Transverse colon (tissue), 4 donors: ENCODE measurements at regions of chr1 and their contacts with region 1.

Region 1: GRCh38 chr1:197924516-197925123 is 7.4 kb downstream of the LHX9 start:
- DNase-seq: no peak
- H3K4me3 ChIP-seq: no peak overlapping the region
- H3K27ac ChIP-seq: no peak overlapping the region
- H3K4me1 ChIP-seq: peaks cover 3 to 15% (median 4%) of the 10 kb centered on the region in 4 donors
- H3K27me3 ChIP-seq: peaks cover 91% of the 10 kb centered on the region
- CTCF ChIP-seq: peak; percentile 56 to 67 (median 62)
- EP300 ChIP-seq: no peak
- POLR2A ChIP-seq: no peak

Region 2: GRCh38 chr1:197521118-197521739 is 403.4 kb before region 1 on chr1:
- in situ Hi-C with region 1: loop called in 1 of 4 experiments (anchors 10 kb)
- intact Hi-C with region 1: no loop called
- DNase-seq: no peak
- H3K4me3 ChIP-seq: no peak overlapping the region
- H3K27ac ChIP-seq: no peak overlapping the region
- H3K4me1 ChIP-seq: no peaks in the 10 kb centered on the region
- H3K27me3 ChIP-seq: no peaks in the 10 kb centered on the region
- CTCF ChIP-seq: peak; percentile 38 to 55 (median 53)
- EP300 ChIP-seq: no peak
- POLR2A ChIP-seq: no peak

Region 3: GRCh38 chr1:198064201-198064600 is 139.6 kb after region 1 on chr1:
- in situ Hi-C with region 1: no loop called
- intact Hi-C with region 1: no loop called
- DNase-seq: no peak
- H3K4me3 ChIP-seq: no peak overlapping the region
- H3K27ac ChIP-seq: no peak overlapping the region
- H3K4me1 ChIP-seq: no peaks in the 10 kb centered on the region
- H3K27me3 ChIP-seq: no peaks in the 10 kb centered on the region
- CTCF ChIP-seq: no peak
- EP300 ChIP-seq: no peak
- POLR2A ChIP-seq: no peak